Ascending aorta (tissue), 2 donors: ENCODE measurements at regions of chr2 and their contacts with region 1.

Region 1: GRCh38 chr2:74147727-74148456 is at the start of gene BOLA3:
- DNase-seq: peak; percentile 33 to 89
- H3K4me3 ChIP-seq: peak within 1 kb of the TSS; percentile 67 to 80
- H3K27ac ChIP-seq: peak within 1 kb of the TSS; percentile 54 to 74
- H3K4me1 ChIP-seq: peaks cover 5 to 19% of the 10 kb centered on the region in 2 donors
- H3K27me3 ChIP-seq: no peaks in the 10 kb centered on the region
- CTCF ChIP-seq: peak; percentile 50 to 68 (median 61)
- total RNA-seq, gene BOLA3: 47.3 TPM

Region 2: GRCh38 chr2:74119912-74120825 is 27.7 kb before region 1 on chr2:
- intact Hi-C with region 1: loop called (anchors 1 kb)
- DNase-seq: peak in 1 of 2 donors; percentile 89
- H3K4me3 ChIP-seq: peak overlapping the region; percentile 70 to 78
- H3K27ac ChIP-seq: peak overlapping the region; percentile 84 to 87
- H3K4me1 ChIP-seq: no peaks in the 10 kb centered on the region
- H3K27me3 ChIP-seq: no peaks in the 10 kb centered on the region
- CTCF ChIP-seq: peak; percentile 57 to 79 (median 76)

Region 3: GRCh38 chr2:74178201-74179062 is 30.5 kb after region 1 on chr2 and contains the start of gene MOB1A:
- intact Hi-C with region 1: loop called (anchors 1 kb)
- DNase-seq: peak; percentile 91 to 99
- H3K4me3 ChIP-seq: peak within 1 kb of the TSS; percentile 76 to 100
- H3K27ac ChIP-seq: peak within 1 kb of the TSS; percentile 88 to 98
- H3K4me1 ChIP-seq: peaks cover 0 to 26% of the 10 kb centered on the region in 2 donors
- H3K27me3 ChIP-seq: no peaks in the 10 kb centered on the region
- CTCF ChIP-seq: no peak
- total RNA-seq, gene MOB1A: 56.8 TPM

Region 4: DNA sequence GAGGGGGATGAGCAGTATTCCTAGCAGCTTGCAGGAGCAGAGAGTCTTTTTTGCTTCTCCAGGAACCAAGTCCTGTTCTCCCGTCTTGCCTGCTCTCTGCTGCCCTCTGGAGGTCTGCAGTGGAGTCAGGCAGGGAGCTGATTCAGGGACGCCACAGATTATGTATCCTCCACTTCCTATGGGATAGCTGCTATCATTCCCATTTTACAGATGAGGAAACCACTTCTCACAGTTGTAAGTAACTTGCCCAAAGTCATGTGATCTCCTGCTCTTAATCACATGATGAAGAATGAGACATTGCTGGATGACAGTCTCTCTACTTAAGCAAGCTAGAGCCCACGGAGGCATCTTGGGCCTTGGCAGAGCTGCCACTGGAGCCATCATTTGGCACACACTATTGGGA is 187.0 kb after region 1 on chr2:
- intact Hi-C with region 1: loop called (anchors 10 kb)
- DNase-seq: peak in 1 of 2 donors; percentile 82
- H3K4me3 ChIP-seq: no peak overlapping the region
- H3K27ac ChIP-seq: no peak overlapping the region
- H3K4me1 ChIP-seq: no peaks in the 10 kb centered on the region
- H3K27me3 ChIP-seq: no peaks in the 10 kb centered on the region
- CTCF ChIP-seq: peak; percentile 76 to 96 (median 93)